HEK293 (cell line): ENCODE measurements at regions of chr19 and their contacts with region 1.

Region 1: GRCh38 chr19:55653758-55654539 is 886 bp upstream of the U2AF2 start:
- H3K4me3 ChIP-seq: peak overlapping the region; percentile 55
- H3K27ac ChIP-seq: peak overlapping the region; percentile 100
- H3K4me1 ChIP-seq: peaks cover 11% of the 10 kb centered on the region
- CTCF ChIP-seq: peak; percentile 100

Region 2: DNA sequence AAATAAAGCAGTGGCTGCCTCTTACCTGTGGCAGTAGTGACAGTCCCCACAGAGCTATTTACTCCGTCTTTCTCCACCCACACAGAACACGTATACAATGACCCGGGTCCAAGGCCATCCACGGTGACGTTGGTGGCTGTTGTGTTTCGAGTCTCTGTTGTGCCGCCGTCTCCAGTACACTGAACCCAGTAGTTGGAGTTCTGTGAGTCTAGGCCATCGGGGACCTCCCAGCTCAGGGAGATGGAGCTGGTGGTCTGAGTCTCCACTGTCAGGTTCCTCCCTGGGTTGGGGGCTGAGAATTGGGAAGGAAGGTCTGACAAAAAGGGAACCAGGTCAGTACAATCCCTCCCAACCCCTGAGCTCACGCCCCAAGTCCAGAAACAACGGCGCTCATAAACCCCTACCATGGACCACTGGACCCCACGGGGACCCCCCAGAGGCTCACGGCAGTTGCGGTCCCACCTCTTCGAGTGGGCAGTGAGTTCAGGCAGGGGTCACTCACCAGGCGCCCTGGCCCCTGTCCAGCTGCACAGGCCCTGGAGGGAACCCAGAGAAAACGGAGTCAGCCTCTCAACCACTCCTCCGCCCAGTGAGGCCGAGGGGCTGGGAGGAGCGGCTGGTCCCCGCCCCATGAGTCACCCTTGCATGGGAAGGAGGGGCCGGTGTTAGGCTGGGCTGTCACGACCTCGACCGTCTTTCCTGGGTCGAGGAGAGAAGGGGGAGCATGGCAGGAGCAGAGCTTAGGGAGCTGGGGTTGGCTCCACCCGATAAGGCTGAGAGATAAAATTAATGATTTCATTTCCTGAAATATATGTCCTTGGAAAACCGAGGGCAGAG is 447.1 kb before region 1 on chr19:
- CTCF ChIA-PET with region 1: no interaction called
- POLR2A ChIA-PET with region 1: interaction called, 15 read pairs
- H3K4me3 ChIP-seq: peak overlapping the region; percentile 4
- H3K27ac ChIP-seq: no peak overlapping the region
- H3K4me1 ChIP-seq: peaks cover 13% of the 10 kb centered on the region
- CTCF ChIP-seq: no peak

Region 3: DNA sequence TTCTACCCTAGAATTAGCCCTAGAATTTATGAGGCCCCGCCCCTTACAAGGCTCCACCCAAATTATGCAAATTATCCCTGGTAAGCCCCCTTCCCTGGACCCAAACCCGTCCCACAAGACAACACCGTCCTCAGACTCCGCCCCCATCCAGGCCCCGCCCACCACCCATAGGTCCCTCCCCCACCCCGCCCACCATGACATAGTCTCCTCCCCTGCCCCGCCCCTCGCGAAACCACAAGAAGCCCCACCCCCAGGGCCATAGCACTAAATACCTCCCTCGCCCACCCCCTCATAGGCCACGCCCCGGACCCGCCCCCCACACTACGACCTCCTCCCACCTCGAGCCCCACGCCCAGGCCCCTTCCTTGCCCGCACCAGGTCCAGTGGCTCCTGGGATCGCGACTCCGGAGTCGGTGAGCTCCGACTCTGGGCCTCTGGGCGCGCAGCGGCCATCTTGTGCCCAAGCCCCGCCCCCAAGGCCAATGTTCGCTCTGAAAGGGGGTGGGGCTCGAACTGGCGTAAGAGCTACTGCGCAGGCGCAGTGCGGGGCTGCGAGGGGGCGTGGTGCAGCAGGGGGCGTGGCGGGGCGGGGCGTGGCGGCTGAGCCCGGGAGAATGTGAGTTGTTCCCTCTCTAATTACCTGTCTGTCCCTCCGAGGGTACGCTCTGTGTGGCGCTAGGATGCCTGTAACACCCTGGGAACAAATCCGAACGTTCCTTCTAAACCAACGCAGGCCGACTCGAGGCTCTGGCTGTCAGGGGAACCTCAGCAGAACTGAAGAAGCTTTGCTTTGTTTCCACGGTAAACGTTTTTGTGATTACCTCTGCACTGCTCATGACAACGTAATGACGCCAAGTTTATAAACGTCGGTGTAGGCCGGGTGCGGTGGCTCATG is 29.6 kb before region 1 on chr19 and contains the start of gene ZNF784:
- CTCF ChIA-PET with region 1: interaction called, 14 read pairs
- POLR2A ChIA-PET with region 1: interaction called, 16 read pairs
- H3K4me3 ChIP-seq: peak within 1 kb of the TSS; percentile 88
- H3K27ac ChIP-seq: peak within 1 kb of the TSS; percentile 87
- H3K4me1 ChIP-seq: peaks cover 5% of the 10 kb centered on the region
- CTCF ChIP-seq: no peak

Region 4: DNA sequence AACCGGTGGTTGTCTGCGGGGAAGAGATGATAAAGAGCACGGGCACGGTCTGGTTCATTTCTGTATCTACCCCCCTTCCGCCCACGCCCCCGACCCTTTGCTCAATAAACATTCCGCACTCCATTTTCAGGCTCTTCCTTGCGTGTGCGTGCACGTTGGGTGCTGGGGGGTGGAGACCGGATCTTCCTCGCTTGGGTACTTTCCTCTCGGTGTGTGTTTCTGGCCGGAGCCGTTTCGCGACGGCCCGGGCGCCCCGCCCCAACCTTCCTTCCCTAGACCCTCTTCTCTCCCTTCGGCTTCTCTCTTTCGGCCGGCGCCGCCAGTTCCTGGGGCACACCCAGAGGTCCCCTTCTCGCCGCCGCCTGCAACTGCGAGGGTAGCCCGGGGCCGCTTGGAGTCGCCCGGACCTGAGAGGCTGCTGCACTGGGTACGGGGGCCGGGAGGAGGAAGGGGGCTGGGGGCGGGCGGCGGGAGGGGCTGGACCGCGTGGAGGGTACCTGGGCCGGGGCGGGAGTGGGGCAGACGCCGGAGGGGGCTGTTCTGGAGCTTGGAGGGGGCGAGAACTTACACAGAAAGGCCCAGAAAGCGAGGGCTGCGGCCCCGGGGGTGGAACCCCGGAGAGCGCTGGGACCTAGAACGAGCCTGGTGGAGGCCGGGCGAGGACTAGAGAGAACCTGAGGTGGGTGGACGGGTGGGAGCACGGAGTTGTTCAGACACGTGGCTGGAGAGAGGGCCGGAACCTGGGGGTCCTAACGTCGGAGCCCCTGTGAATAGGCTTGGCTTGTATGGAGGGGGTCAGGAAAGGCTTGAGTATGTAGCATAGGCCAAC is 10.4 kb before region 1 on chr19 and contains the start of gene ZNF581:
- CTCF ChIA-PET with region 1: interaction called, 12 read pairs
- POLR2A ChIA-PET with region 1: interaction called, 36 read pairs
- H3K4me3 ChIP-seq: peak within 1 kb of the TSS; percentile 61
- H3K27ac ChIP-seq: peak within 1 kb of the TSS; percentile 83
- H3K4me1 ChIP-seq: peaks cover 27% of the 10 kb centered on the region
- CTCF ChIP-seq: no peak

Region 5: DNA sequence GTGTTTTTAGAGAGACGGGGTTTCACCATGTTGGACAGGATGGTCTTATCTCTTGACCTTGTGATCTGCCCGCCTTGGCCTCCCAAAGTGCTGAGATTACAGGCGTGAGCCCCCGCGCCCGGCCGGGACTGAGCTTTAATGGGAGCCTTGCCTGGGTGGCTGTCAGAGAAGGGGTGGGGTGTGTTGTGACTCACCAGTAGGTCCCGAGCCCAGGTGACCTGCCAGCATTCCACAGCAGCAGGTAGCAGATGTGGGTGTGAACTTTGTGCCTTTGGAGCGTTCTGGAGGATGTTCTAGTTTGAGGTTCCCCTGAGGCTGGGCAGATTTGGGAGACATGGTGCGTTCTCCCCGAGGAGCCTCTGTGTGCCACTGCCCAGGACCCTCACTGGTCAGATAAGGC is 14.0 kb after region 1 on chr19:
- CTCF ChIA-PET with region 1: interaction called, 36 read pairs
- POLR2A ChIA-PET with region 1: interaction called, 21 read pairs
- H3K4me3 ChIP-seq: no peak overlapping the region
- H3K27ac ChIP-seq: no peak overlapping the region
- H3K4me1 ChIP-seq: peaks cover 8% of the 10 kb centered on the region
- CTCF ChIP-seq: no peak

Region 6: GRCh38 chr19:55674841-55675660 is 21.1 kb after region 1 on chr19 and contains the start of gene EPN1:
- CTCF ChIA-PET with region 1: interaction called, 36 read pairs
- POLR2A ChIA-PET with region 1: interaction called, 21 read pairs
- H3K4me3 ChIP-seq: peak within 1 kb of the TSS; percentile 99
- H3K27ac ChIP-seq: peak within 1 kb of the TSS; percentile 82
- H3K4me1 ChIP-seq: peaks cover 19% of the 10 kb centered on the region
- CTCF ChIP-seq: no peak